ENCODE measurements at regions of chr6 and their contacts with region 1.

Region 1: GRCh38 chr6:25485821-25486534 is 166.0 kb upstream of the SCGN start:
- DNase-seq: peak; percentile 21 to 33
- H3K4me3 ChIP-seq: no peak overlapping the region
- H3K27ac ChIP-seq: no peak overlapping the region
- H3K4me1 ChIP-seq: no peaks in the 10 kb centered on the region
- H3K27me3 ChIP-seq: no peaks in the 10 kb centered on the region
- CTCF ChIP-seq: no peak
- POLR2A ChIP-seq: no peak

Region 2: GRCh38 chr6:25278914-25279747 is 206.8 kb before region 1 on chr6 and contains the start of gene CARMIL1:
- intact Hi-C with region 1: loop called (anchors 5 kb)
- DNase-seq: peak; percentile 74 to 82
- H3K4me3 ChIP-seq: peak within 1 kb of the TSS; percentile 54 to 90
- H3K27ac ChIP-seq: peak within 1 kb of the TSS; percentile 73 to 80
- H3K4me1 ChIP-seq: no peaks in the 10 kb centered on the region
- H3K27me3 ChIP-seq: no peaks in the 10 kb centered on the region
- CTCF ChIP-seq: peak; percentile 67 to 89 (median 81)
- POLR2A ChIP-seq: peak in 1 of 2 donors; percentile 47
- total RNA-seq, gene CARMIL1: 11.8 to 23.2 (median 17.1) TPM

Measured in uterus (tissue), 4 donors.